Breast epithelium (tissue), 4 donors: ENCODE measurements at regions of chr18 and their contacts with region 1.

Region 1: DNA sequence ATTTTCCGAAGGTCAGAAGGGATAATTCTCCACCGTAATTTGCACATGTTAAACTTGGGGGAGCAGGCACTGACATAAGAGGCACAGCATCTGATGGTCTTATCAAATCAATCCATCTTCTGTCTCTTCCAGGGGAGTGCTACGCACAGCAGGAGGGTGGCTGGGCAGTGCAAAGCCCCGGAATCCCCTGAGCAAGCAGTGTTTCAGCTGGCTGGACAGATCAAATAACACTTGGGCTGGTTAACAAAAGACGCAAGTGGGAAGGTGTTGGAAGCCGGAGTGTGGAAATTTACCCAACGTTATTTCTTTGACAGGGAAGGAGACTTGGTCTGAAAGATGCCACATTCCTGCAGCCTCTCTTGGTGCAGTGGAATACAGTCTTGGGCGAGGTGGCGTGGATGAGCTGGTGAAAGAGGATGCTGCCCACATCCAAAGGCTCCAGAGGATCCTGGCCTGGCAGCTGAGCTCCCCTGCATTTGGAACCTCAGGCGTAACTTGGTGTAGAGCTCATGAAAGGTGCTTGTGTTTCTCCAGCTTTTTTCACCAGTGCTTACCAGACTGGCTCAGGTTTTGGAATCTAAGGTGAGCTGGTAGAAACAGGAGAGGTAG is 103.0 kb downstream of the MAPK4 start:
- DNase-seq: no peak
- H3K4me3 ChIP-seq: no peak overlapping the region
- H3K27ac ChIP-seq: no peak overlapping the region
- H3K4me1 ChIP-seq: no peaks in the 10 kb centered on the region
- H3K27me3 ChIP-seq: no peaks in the 10 kb centered on the region
- CTCF ChIP-seq: no peak
- POLR2A ChIP-seq: no peak

Region 2: GRCh38 chr18:50686409-50686808 is 23.5 kb after region 1 on chr18:
- intact Hi-C with region 1: loop called (anchors 1 kb)
- DNase-seq: no peak
- H3K4me3 ChIP-seq: no peak overlapping the region
- H3K27ac ChIP-seq: no peak overlapping the region
- H3K4me1 ChIP-seq: no peaks in the 10 kb centered on the region
- H3K27me3 ChIP-seq: no peaks in the 10 kb centered on the region
- CTCF ChIP-seq: no peak
- POLR2A ChIP-seq: no peak

Region 3: DNA sequence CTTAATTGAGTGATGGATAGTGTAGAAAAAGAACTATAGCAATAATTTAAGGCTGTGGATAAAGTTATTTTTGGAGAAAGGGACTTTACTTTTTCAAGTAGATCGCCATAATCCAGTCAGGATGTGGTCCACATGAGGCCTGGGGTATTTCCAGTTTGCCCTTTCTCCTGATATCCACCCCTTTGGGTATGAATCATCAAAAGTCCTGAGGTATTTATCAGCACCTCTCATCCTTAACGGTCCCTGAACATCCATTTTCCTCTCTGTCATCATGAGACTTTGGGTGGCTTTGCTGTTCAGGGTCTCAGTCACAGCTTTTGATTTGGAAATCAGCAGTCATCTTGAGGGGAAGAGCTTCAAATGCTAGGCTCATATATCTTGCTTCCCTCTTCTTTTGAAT is 265.7 kb after region 1 on chr18:
- intact Hi-C with region 1: no loop called
- DNase-seq: no peak
- H3K4me3 ChIP-seq: no peak overlapping the region
- H3K27ac ChIP-seq: no peak overlapping the region
- H3K4me1 ChIP-seq: no peaks in the 10 kb centered on the region
- H3K27me3 ChIP-seq: no peaks in the 10 kb centered on the region
- CTCF ChIP-seq: no peak
- POLR2A ChIP-seq: no peak